ENCODE measurements at regions of chr11 and their contacts with region 1.

Region 1: GRCh38 chr11:83836883-83837654 is 550.9 kb upstream of the CCDC90B start:
- DNase-seq: peak in 8 of 10 donors; percentile 15 to 68 (median 58)
- H3K4me3 ChIP-seq: no peak overlapping the region
- H3K27ac ChIP-seq: peak overlapping the region; percentile 46 to 97 (median 88)
- H3K27me3 ChIP-seq: no peaks in the 10 kb centered on the region
- CTCF ChIP-seq: peak; percentile 28 to 88 (median 76)

Region 2: DNA sequence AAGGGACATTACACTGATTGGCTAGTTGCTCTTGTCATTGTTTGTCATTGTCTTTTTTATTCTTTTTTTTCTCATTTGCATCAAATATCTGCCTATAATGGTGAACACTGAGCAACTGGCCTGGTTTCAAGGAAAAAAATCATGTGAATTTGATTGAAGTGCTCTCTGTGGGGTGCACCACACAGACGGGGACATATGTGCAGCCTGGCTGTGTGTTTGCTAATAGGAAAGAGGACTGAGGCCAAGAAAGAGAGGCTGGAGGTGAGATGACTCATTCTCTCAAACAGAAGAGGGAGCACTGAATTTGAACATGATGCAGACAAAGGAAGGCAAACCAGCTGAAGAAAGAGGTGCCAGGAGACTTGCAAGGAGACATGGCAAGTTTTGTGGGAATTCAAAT is 134.0 kb after region 1 on chr11:
- intact Hi-C with region 1: loop called in 1 of 2 experiments (anchors 10 kb)
- DNase-seq: peak in 6 of 10 donors; percentile 6 to 43 (median 34)
- H3K4me3 ChIP-seq: peak overlapping the region in 7 of 59 donors; percentile 0 to 29 (median 7)
- H3K27ac ChIP-seq: peak overlapping the region in 57 of 59 donors; percentile 32 to 91 (median 83)
- H3K27me3 ChIP-seq: no peaks in the 10 kb centered on the region
- CTCF ChIP-seq: peak in 11 of 56 donors; percentile 9 to 35 (median 15)

Region 3: DNA sequence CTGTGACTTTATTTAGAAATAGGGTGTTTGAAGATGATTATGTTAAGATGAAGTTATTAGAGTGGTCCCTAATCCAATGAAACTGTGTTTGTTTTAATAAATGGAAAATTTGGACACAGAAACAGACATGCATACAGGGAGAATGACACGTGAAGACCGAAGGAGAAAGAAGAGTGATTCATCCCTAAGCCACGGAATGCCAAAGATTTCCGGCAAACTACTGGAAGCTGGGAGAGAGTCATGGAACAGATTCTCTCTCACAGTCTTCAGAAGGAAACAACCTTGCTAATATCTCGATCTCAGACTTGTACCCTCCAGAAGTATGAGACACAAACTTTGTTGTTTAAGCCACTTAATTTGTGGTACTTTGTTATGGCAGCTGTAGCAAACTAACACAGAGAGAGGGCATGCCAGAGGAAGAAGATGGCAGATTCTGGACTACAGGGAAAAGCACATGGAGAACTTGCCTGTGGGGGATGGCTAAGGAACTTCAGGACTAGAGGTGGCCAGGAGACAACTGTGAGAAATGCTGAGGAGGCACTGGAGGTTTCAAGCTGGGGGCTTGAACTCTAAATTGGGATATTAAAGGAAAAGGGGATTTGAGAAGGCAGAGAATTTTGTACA is 182.6 kb after region 1 on chr11:
- intact Hi-C with region 1: loop called in 1 of 2 experiments (anchors 5 kb)
- DNase-seq: no peak
- H3K4me3 ChIP-seq: peak overlapping the region in 1 of 59 donors; percentile 36
- H3K27ac ChIP-seq: peak overlapping the region in 57 of 59 donors; percentile 22 to 96 (median 90)
- H3K27me3 ChIP-seq: no peaks in the 10 kb centered on the region
- CTCF ChIP-seq: no peak

Region 4: DNA sequence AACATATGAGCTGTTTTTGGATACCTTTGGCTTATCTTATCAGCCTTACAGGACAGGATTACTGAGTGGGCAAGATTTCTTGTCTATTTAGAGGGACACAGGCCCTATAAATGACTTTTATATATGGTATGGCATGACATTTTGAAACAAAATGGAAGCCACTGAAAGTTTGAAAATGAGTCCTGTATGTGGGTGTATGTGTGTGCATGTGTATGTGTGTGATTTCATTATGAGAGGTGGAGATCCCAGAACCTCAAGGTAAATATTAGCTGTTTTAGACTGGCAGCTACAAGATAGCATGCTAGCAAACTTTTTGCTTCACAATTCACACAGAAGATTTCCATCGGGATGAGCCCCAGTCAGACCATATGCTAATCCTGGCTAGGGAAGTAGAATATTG is 419.5 kb after region 1 on chr11:
- intact Hi-C with region 1: loop called (anchors 5 kb)
- DNase-seq: no peak
- H3K4me3 ChIP-seq: no peak overlapping the region
- H3K27ac ChIP-seq: peak overlapping the region in 25 of 59 donors; percentile 1 to 100 (median 49)
- H3K27me3 ChIP-seq: no peaks in the 10 kb centered on the region
- CTCF ChIP-seq: no peak

Region 5: GRCh38 chr11:84384731-84385130 is 547.7 kb after region 1 on chr11:
- intact Hi-C with region 1: loop called in 1 of 2 experiments (anchors 10 kb)
- DNase-seq: peak in 7 of 10 donors; percentile 38 to 81 (median 55)
- H3K4me3 ChIP-seq: no peak overlapping the region
- H3K27ac ChIP-seq: peak overlapping the region in 37 of 59 donors; percentile 1 to 74 (median 42)
- H3K27me3 ChIP-seq: no peaks in the 10 kb centered on the region
- CTCF ChIP-seq: peak; percentile 30 to 96 (median 87)

Measured in dorsolateral prefrontal cortex (tissue), 120 donors.